Heart left ventricle (tissue), 16 donors: ENCODE measurements at regions of chr7 and their contacts with region 1.

Region 1: GRCh38 chr7:16098585-16099179 is 322.7 kb downstream of the CRPPA start:
- DNase-seq: no peak
- ATAC-seq: no peak
- H3K4me3 ChIP-seq: no peak overlapping the region
- H3K27ac ChIP-seq: peak overlapping the region in 1 of 12 donors; percentile 17
- H3K4me1 ChIP-seq: peaks cover 0 to 25% (median 8%) of the 10 kb centered on the region in 12 donors
- H3K27me3 ChIP-seq: no peaks in the 10 kb centered on the region
- CTCF ChIP-seq: peak; percentile 69 to 91 (median 82)
- POLR2A ChIP-seq: no peak

Region 2: GRCh38 chr7:16078076-16078952 is 20.4 kb before region 1 on chr7:
- intact Hi-C with region 1: loop called in 2 of 10 experiments (anchors 1 to 2 kb)
- DNase-seq: peak in 1 of 5 donors; percentile 45
- ATAC-seq: peak in 2 of 4 donors; percentile 65 to 66
- H3K4me3 ChIP-seq: no peak overlapping the region
- H3K27ac ChIP-seq: no peak overlapping the region
- H3K4me1 ChIP-seq: peaks cover 0 to 4% (median 0%) of the 10 kb centered on the region in 12 donors
- H3K27me3 ChIP-seq: no peaks in the 10 kb centered on the region
- CTCF ChIP-seq: peak; percentile 52 to 86 (median 74)
- POLR2A ChIP-seq: no peak

Region 3: DNA sequence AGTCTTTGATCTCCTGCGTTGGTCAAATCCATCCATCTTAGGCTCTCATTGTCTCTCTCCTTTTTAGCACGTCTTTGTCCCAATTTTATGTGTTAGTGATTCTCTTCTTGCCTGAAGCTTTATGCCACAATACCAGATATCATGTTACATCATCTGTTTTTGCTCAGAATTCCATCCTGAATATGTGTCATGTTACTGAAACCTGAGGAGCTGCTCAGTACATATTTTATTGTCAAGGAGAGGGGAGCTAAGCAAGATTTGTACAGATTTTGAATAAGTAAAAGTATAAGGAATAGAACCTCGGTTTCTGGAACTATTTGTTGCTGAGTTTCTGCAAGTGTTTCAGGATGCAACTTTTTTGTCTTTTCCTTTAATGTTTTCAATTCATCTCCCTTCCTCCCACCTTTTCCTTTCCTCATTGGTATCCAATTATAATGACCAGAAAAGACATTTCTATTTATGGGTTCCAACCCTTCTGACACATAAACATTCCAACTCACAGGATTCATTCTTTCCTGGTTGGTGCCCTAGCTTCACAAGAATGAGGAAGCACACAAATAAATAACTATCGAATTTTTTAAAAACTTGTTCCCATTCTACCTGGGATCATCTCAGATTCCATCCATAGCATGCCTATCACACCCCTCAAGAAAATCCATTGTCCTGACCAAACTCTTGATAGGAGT is 30.9 kb after region 1 on chr7:
- intact Hi-C with region 1: loop called in 1 of 10 experiments (anchors 2 kb)
- DNase-seq: no peak
- ATAC-seq: peak in 1 of 4 donors; percentile 31
- H3K4me3 ChIP-seq: no peak overlapping the region
- H3K27ac ChIP-seq: peak overlapping the region in 10 of 12 donors; percentile 14 to 74 (median 52)
- H3K4me1 ChIP-seq: peaks cover 0 to 26% (median 14%) of the 10 kb centered on the region in 12 donors
- H3K27me3 ChIP-seq: no peaks in the 10 kb centered on the region
- CTCF ChIP-seq: no peak
- POLR2A ChIP-seq: no peak